IMR-90 (cell line): ENCODE measurements at regions of chr2 and their contacts with region 1.

Region 1: DNA sequence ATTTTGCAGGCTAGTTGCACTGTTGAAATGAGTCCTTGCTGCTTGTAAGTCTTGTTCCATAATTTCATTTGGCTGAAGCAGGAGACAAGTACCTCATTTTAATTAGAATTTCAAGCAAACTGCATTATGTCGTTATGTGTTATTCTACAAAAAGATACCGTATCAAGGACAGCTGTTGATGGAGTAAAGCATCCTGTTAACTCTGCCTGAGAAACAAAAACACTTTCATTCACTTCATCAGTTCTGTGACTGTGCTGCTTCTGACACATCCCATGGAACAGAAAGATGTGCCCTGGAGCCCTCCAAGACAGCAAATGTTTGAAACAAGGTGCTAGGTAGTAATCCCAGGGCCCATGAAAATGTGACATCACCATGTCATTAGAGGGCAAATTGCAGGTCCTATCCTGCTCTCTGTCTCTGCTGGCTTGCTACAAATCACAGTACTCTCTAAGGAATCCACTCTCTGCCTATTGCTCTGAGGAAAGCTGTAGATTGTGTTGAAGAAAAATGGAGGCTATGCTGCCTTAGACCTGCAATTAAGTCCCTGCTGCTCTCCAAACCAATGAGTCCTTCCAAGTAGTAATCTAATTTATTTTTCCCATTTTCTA is 209.7 kb upstream of the PARD3B start:
- DNase-seq: no peak
- ATAC-seq: no peak
- H3K4me3 ChIP-seq: no peak overlapping the region
- H3K27ac ChIP-seq: no peak overlapping the region
- H3K4me1 ChIP-seq: peaks cover 11% of the 10 kb centered on the region; the same call in 1 of the 2 replicates
- H3K27me3 ChIP-seq: no peaks in the 10 kb centered on the region
- CTCF ChIP-seq: no peak
- POLR2A ChIP-seq: no peak
- RAD21 ChIP-seq: no peak

Region 2: DNA sequence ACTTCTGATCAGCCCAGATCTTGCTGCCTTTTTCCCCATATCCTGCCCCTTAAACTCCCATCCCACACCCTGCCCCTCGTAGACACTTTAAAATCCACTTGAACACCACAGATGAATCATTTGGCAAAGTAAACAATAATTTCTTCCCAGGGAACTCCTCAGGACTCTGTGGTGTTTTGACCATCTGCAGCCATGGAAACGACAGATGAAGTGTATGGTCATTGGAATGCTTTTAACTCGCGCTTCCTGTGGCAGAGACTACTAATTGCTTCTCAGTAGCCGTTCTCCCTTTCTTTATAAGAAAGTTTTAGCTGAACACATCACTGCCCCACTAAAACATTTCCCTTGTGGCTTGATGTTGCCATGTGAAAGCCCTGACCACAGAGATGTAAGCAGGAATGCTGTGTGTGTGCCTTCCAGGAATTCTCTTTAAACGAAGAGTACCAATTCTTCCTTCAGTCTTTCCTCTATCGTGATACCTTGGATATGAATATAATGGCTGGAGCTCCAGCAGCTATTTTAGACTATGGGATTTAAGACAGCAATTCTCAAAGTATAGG is 117.0 kb after region 1 on chr2:
- CTCF ChIA-PET with region 1: interaction called, 3 read pairs
- POLR2A ChIA-PET with region 1: no interaction called
- dilution Hi-C with region 1: no loop called
- in situ Hi-C with region 1: no loop called
- intact Hi-C with region 1: loop called (anchors 5 kb)
- DNase-seq: peak; percentile 98
- ATAC-seq: peak; percentile 98
- H3K4me3 ChIP-seq: peak overlapping the region; percentile 22; the same call in 1 of the 2 replicates
- H3K27ac ChIP-seq: peak overlapping the region; percentile 31; the same call in 1 of the 2 replicates
- H3K4me1 ChIP-seq: peaks cover 7% of the 10 kb centered on the region
- H3K27me3 ChIP-seq: no peaks in the 10 kb centered on the region
- CTCF ChIP-seq: no peak
- POLR2A ChIP-seq: peak; percentile 72
- RAD21 ChIP-seq: no peak; the same call in none of the 2 replicates

Region 3: GRCh38 chr2:204550751-204551511 is 215.4 kb after region 1 on chr2:
- CTCF ChIA-PET with region 1: no interaction called
- POLR2A ChIA-PET with region 1: no interaction called
- dilution Hi-C with region 1: no loop called
- in situ Hi-C with region 1: loop called (anchors 5 kb)
- intact Hi-C with region 1: no loop called
- DNase-seq: peak; percentile 96
- ATAC-seq: peak; percentile 84
- H3K4me3 ChIP-seq: no peak overlapping the region; the same call in 1 of the 2 replicates
- H3K27ac ChIP-seq: peak overlapping the region; percentile 99
- H3K4me1 ChIP-seq: peaks cover 20% of the 10 kb centered on the region
- H3K27me3 ChIP-seq: no peaks in the 10 kb centered on the region
- CTCF ChIP-seq: no peak
- POLR2A ChIP-seq: no peak
- RAD21 ChIP-seq: no peak